GM10248 (cell line): ENCODE measurements at regions of chr14 and their contacts with region 1.

Region 1: GRCh38 chr14:32252030-32252670 is 49.1 kb upstream of the RNU6-8 start:
- DNase-seq: peak; percentile 60
- CTCF ChIP-seq: peak; percentile 86

Region 2: GRCh38 chr14:31510222-31510621 is 741.9 kb before region 1 on chr14:
- CTCF ChIA-PET with region 1: interaction called, 12 read pairs
- POLR2A ChIA-PET with region 1: no interaction called
- DNase-seq: peak; percentile 23
- CTCF ChIP-seq: peak; percentile 48

Region 3: DNA sequence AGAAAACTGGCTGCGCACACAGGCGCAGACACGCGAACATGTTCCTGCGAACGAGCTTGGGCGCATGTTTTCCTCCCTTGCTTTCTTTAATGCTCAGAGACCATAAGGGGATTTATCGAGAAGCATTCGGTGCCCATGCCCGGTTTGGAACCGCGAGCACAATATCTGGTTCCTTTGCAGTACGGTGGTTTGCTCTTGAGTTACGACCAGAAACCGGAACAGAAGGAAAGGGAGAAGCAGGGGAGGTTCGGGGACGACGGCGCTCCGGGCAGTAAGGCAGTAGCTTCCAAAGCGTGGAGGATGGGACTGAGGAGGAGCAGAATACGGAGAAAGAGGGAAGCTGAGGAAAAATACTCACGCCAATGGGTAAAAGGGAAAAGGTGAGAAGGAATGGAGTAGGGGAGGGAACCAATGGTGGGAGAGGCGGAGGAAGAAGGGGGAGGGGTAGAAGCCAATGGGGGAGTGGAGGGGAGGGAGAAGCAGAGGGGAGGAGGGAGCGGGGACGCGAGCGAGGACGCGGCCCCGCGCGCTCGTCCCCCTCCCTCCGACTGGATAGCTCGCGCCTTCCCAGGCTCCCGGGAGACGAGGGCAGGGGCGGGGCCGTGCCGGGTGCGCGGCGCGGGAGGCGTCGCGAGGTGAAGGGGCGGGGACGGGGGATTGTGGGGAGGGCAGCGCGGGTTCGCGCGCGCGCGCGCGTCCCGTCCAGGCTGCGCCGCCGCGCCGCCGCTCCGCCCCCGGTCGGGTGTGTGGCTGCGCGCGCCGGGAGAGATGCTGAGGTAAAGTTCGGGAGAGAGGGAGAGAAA is 175.7 kb before region 1 on chr14:
- CTCF ChIA-PET with region 1: interaction called, 135 read pairs
- POLR2A ChIA-PET with region 1: no interaction called
- DNase-seq: peak; percentile 79
- CTCF ChIP-seq: no peak

Region 4: DNA sequence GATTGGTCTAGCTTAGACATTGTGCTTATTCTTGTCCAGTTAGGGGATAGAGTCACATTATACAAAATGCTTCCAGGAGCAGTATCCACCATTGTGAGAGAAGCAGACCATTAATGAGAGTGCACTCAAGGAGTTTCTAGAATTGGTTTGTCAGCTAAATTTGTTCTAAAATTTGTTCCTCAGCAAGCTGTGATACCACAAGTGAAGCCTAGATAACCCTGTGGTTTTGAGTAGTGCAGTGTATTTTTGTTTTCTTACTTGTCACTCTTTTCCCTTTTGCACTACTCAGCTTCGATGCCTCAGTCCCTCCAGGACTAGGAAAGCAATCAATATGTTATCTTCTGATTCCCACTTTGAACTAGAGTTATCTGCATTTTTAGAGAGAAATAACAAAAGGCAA is 34.5 kb after region 1 on chr14:
- CTCF ChIA-PET with region 1: no interaction called
- POLR2A ChIA-PET with region 1: no interaction called
- DNase-seq: no peak
- CTCF ChIP-seq: no peak

Region 5: DNA sequence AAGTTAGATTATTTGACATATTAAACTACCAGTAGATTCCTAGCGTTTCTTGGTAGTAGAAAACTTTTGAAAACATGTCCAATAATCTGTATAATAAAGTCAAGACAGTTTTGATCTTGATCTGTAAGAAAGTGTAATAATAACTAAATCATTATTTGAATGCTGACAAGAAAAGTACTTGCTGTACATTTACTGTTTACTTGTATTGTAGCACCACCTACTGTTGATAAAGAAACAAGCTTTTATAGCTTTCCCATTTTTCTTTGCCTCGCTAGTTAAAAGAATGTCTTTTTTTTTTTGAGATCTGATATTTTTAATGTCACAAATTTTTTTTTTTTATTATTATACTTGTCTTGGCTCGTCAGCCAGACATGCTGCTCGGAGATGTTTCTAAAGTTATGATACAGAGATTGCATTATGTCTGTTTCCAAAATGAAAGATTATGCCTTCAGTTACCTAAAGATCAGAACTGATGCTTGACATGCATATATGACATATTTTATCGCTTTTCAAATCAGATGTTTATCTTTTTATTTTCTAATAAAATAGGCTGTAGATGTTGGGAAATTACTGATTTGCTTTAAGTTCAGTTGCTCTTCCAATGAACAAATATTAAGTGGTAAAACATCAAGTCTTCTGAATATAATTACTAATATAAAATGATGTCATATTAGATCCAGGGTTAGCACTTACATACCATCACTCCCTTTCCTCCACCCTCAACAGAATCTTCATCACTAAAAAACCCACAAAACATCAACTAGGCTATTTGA is 217.4 kb after region 1 on chr14:
- CTCF ChIA-PET with region 1: interaction called, 13 read pairs
- POLR2A ChIA-PET with region 1: no interaction called
- DNase-seq: peak; percentile 22
- CTCF ChIP-seq: peak; percentile 56